ENCODE measurements at regions of chr6 and their contacts with region 1.

Region 1: GRCh38 chr6:168370310-168370991 is 50.9 kb upstream of the DACT2 start:
- DNase-seq: peak; percentile 38
- H3K4me3 ChIP-seq: no peak overlapping the region
- H3K27ac ChIP-seq: no peak overlapping the region
- H3K4me1 ChIP-seq: no peaks in the 10 kb centered on the region
- CTCF ChIP-seq: peak; percentile 86

Region 2: GRCh38 chr6:168355716-168356449 is 14.6 kb before region 1 on chr6:
- CTCF ChIA-PET with region 1: no interaction called
- POLR2A ChIA-PET with region 1: no interaction called
- intact Hi-C with region 1: no loop called
- DNase-seq: no peak
- H3K4me3 ChIP-seq: no peak overlapping the region
- H3K27ac ChIP-seq: no peak overlapping the region
- H3K4me1 ChIP-seq: no peaks in the 10 kb centered on the region
- CTCF ChIP-seq: peak; percentile 59

Region 3: DNA sequence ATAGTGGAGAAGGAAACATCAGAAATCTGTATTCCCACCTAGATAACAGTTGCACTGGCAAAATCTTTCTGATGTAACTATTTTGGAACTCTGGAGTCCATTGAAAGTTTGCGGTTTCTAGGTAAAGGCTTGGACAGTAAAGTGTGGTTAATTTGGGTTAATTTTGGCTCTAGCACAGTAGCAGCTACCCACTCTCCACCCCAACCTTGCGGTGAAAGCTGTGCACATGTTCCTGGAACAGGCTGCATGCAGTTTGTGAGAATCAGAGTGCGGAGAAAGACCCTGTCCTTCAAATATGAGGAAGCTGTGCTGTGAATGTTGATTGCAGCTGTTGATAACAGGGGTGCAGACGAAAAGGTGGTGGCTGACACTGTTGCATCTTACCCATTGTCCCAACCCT is 109.0 kb after region 1 on chr6:
- CTCF ChIA-PET with region 1: no interaction called
- POLR2A ChIA-PET with region 1: no interaction called
- intact Hi-C with region 1: no loop called
- DNase-seq: no peak
- H3K4me3 ChIP-seq: no peak overlapping the region
- H3K27ac ChIP-seq: no peak overlapping the region
- H3K4me1 ChIP-seq: no peaks in the 10 kb centered on the region
- CTCF ChIP-seq: no peak

Region 4: GRCh38 chr6:168838037-168838399 is 467.6 kb after region 1 on chr6:
- CTCF ChIA-PET with region 1: no interaction called
- POLR2A ChIA-PET with region 1: no interaction called
- intact Hi-C with region 1: no loop called
- DNase-seq: no peak
- H3K4me3 ChIP-seq: no peak overlapping the region
- H3K27ac ChIP-seq: no peak overlapping the region
- H3K4me1 ChIP-seq: no peaks in the 10 kb centered on the region
- CTCF ChIP-seq: no peak

Region 5: GRCh38 chr6:168884646-168885086 is 514.2 kb after region 1 on chr6:
- CTCF ChIA-PET with region 1: no interaction called
- POLR2A ChIA-PET with region 1: no interaction called
- intact Hi-C with region 1: loop called (anchors 1 kb)
- DNase-seq: peak; percentile 46
- H3K4me3 ChIP-seq: peak overlapping the region; percentile 28
- H3K27ac ChIP-seq: no peak overlapping the region
- H3K4me1 ChIP-seq: no peaks in the 10 kb centered on the region
- CTCF ChIP-seq: peak; percentile 88

Measured in OCI-LY7 (cell line).